Ascending aorta (tissue), 2 donors: ENCODE measurements at regions of chr4 and their contacts with region 1.

Region 1: DNA sequence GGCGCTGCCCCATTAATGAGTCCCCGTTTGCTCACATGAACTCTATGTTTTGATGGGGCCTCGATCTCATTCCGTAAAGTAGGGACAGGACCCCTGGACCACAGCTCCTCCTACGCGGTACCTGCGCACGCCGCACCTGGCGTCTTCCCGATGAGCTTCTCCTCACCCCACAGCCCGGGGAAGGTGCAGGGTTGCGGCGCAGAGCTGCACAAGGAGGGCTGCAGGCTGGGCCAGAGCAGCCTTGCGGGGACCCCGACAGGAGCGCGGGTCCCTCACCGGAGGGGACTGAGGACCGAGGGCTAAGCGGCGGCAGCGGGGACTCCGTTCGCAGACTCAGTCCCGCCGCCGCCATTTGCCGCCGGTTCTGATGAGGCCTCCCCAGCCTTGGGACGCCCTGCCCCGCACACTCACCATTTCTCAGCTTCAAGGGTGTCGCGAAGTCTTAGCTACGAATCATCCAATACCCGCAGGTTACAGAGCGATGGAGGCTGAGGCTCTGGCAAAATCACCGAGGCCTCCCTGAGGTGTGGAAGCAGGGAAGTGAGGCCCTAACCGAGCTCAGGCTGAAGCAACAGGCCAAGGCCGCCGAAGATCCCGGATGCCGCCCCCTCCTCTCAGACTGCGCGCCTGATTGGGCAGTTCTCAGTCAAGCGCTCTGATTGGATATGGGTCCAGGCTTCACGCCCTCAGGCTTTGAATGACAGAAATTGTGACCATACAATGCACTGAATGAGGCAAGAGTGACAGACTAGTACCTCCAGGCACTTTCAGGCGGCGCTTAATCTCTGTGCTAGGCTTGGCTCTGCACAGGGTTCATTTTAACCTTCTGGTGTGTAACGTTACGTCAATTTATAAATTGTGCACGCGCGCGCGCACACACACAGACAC is 25.1 kb downstream of the ZNF721 start:
- DNase-seq: peak; percentile 89 to 97
- H3K4me3 ChIP-seq: peak overlapping the region; percentile 90 to 95
- H3K27ac ChIP-seq: peak overlapping the region; percentile 84 to 85
- H3K4me1 ChIP-seq: peaks cover 0 to 4% of the 10 kb centered on the region in 2 donors
- H3K27me3 ChIP-seq: no peaks in the 10 kb centered on the region
- CTCF ChIP-seq: no peak

Region 2: GRCh38 chr4:498328-498904 is 24.6 kb after region 1 on chr4:
- intact Hi-C with region 1: loop called (anchors 1 kb)
- DNase-seq: no peak
- H3K4me3 ChIP-seq: peak overlapping the region; percentile 72 to 87
- H3K27ac ChIP-seq: peak overlapping the region; percentile 62 to 92
- H3K4me1 ChIP-seq: peaks cover 6 to 9% of the 10 kb centered on the region in 2 donors
- H3K27me3 ChIP-seq: no peaks in the 10 kb centered on the region
- CTCF ChIP-seq: no peak

Region 3: GRCh38 chr4:637536-638280 is 163.9 kb after region 1 on chr4:
- intact Hi-C with region 1: no loop called
- DNase-seq: no peak
- H3K4me3 ChIP-seq: no peak overlapping the region
- H3K27ac ChIP-seq: no peak overlapping the region
- H3K4me1 ChIP-seq: no peaks in the 10 kb centered on the region
- H3K27me3 ChIP-seq: no peaks in the 10 kb centered on the region
- CTCF ChIP-seq: no peak